Right ventricle myocardium inferior (tissue), 1 donor: ENCODE measurements at regions of chr14 and their contacts with region 1.

Region 1: DNA sequence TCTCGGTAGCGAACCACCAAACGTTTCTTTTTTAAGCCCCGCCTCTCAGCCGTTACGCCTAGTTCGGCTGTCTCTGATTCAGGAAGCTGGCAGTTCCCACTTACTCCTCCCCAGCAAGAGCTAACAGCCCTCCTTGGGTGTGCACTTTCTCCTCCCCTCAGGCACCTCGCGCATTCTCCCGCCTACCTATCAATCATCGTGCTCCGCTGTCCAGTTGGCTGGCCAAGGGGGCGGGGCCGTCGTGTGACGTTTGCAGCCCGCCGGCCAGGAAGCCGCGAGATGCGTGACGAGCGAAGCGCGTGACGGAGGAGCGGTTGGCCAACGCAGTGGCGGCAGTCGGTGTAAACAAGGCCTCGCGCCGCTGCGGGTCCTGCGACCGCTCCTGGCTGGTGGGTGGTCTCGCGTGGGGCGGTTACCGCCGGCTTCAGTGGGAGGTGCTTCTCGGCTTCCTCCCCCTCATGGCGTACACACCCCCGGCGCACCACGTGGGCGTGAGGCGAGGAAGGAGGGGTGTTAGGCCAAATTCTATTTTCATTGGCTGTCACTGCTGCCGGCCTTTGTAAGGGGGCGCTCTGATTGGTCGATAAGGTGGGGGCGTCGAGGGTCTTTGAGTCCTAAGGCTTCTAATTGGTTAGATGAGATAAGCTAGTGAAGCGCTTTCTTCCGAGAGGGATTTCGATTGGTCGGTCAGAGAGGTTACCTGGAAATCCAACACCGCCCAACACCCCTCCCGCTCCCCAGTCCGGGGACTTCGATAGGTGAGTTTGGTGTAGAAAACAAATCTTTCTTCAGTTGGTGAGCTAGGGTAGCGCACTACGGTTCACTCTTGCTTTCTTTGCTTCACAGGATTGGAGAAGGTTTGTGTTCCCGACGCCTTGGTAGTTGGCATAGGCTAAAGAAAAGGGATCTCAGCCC is at the starts of genes DCAF11 and NRL:
- DNase-seq: peak; percentile 99
- ATAC-seq: peak; percentile 96
- total RNA-seq, gene DCAF11: 84.7 TPM
- total RNA-seq, gene NRL: 1.8 TPM

Region 2: DNA sequence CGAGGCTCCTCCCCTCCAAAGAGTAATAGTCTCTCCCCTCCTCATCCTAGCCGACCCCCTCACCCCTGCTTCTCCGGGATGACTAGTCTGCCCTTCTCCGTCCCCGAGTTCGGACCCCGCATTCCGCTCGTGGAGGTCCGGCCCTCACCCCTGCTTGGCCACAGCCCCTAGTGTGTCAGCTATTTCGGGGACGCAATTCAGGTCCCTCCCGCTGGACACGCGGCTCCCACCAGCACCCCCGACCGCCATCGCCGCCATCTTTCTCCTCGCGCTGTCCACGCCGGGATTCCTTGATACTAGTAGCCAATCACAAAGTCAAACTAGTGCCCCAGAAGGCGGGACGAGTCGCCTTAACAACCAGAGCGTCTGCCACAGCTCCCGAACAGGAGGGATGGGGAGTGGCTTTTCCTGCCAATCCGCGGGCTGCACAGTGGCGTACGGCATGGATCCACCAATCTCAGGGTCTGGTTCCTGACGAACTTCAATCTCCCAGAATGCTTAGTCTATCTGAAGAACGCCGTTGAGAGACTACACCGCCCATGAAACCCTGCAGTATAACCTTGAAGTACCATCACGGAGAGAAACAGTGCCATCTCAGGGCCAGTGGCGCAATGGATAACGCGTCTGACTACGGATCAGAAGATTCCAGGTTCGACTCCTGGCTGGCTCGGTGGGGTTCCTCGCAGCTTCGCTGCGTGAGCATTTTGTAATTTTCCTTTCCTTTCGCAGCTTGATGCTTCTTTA is 1185.5 kb before region 1 on chr14 and contains the start of gene PRMT5:
- intact Hi-C with region 1: loop called (anchors 5 kb)
- DNase-seq: peak; percentile 98
- ATAC-seq: peak; percentile 98
- total RNA-seq, gene PRMT5: 48.7 TPM

Region 3: DNA sequence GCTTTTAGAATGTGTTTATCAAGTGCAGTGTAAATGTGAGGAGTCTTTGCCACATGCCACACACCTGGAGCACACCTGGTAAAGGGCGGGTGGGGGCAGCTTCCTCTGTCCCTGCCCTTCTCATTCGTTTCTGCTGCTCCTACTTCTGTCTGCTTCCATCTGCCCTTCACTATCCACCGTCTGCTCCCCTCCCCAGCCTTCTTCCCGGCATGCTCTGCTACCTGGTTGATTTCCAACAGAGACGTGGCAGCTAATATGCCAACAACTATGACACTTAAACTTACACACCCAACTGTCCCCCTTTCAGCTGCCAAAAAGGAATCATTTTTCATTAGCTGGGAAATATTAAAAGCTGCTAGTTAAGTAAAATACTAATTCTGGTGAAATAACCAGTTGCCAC is 72.0 kb before region 1 on chr14:
- intact Hi-C with region 1: no loop called
- DNase-seq: no peak
- ATAC-seq: peak; percentile 26

Region 4: DNA sequence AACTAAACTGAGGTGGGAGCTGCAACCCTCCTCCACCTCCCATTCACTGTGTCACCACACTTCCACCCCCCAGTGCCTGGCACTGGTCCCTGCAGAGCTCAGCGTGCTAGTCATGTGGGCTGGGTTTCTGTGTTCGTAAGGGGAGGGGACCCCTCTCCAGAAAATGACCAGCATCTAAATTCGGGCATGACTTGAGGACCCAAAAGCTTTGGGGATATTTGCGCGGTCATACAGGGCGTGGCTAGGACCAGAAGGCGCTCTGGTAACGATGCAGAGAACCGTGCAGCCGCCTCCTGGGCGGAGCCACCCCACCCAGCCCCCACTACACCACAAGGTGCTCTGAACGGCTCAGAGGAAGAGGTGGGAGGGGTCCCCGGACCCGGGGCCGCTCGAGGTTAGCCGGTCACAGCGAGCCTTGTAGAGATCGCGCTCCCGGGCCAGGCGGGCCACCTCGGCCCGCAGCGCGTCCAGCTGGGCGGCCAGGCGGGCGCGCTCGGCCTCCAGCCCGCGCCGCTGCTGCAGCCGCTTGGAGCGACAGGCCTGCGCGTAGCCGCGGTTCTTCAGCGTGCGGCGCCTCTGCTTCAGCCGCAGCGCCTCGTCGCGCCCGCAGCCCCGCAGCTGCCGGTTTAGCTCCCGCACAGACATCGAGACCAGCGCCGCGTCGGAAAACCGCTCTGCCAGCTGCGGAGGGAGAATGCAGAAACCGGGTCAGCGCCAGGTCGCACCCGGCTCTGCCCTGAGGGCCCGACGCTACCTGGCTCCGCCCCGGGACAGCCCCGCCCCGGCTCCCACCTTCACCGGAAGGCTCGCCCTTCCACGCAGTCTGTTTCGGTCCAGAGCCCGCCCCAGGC is 33.7 kb before region 1 on chr14:
- intact Hi-C with region 1: no loop called
- DNase-seq: no peak
- ATAC-seq: peak; percentile 76

Region 5: GRCh38 chr14:24130717-24131548 is 16.1 kb after region 1 on chr14:
- intact Hi-C with region 1: loop called (anchors 1 kb)
- DNase-seq: peak; percentile 85
- ATAC-seq: peak; percentile 71

Region 6: DNA sequence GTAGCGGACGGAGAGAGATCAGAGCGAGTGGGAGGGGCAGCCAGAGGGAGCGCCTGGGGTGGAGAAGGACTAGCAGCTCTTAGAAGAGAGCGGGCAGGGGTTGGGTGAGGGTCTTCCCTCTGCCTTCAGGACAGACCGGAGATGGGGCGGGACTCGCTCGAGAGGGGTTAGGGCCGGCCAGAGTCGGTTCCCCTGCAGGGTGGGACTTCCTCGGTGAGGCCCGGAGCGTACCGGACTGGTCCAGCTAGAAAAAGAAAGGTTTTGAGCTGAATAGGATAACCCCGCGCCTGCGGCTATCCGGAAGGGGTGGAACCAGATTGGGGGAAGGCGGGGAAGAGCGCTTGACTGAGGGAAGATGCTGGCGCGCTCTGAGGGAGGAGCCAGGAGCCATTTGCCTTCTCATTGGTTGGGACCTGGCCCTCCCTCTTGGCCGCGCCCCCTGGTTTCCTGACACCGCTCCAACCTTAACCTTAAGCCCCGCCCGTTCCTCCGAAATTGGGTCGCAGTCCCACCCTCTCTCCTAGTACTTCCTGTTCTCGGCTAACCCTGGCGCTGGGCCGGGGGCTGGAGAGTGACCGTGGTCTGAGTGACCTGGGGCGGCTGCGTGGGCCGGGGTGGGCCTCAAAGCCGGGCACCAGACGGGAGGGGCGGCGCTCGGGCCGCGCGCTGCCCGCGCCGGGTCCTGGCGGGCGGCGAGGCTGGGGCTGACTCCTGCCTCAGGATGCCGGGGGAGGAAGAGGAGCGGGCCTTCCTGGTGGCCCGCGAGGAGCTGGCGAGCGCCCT is 32.4 kb after region 1 on chr14 and contains the start of gene RNF31:
- intact Hi-C with region 1: loop called (anchors 1 kb)
- DNase-seq: peak; percentile 98
- ATAC-seq: peak; percentile 95
- total RNA-seq, gene RNF31: 33.4 TPM

Region 7: DNA sequence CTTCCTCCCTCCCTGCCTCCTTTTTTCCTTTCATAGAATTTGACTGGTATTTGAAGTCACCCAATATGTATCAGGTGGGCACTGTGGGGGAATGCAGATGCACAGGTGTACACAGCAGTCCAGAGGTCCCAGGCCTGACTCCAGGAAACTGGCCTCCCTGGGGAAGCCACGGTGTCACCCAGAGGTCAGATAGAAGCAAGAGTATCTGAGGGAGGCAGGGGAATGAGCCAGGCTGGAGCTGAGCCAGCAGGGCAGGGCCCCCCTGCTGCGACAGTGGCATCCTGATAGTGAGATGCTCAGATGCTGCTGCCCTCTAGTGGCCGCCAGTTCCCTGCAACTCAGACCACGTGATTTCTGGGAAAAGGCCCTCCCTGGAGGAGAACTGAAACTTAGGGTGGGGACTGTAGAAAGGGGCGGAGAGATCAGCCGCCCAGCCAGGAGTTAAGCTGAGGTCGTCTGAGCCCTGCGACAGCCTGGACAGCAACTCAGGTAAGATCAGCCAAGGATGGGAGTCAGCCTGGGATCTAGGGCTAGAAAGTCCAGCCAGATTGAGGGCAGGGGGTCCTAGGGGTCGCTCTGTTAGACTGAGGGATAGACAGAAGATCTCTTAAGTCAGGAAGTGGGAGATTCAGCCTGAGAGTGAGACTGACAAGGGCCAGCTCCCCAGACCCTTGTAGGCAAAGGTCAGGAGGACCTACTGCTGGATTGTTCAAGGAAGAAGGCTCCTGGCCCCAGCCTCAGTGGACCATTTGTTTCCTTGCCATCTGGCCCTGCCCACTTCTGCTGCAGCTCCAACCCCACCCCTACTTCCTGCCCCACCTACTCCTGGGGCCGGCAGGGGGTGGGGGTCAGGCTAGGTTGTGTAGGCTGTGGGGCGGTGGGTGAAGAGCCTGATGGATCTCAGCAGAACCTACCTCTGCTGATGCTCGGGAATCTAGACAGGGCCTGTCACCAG is 46.3 kb after region 1 on chr14 and contains the start of gene IRF9:
- intact Hi-C with region 1: loop called (anchors 1 kb)
- DNase-seq: peak; percentile 96
- ATAC-seq: peak; percentile 94
- total RNA-seq, gene IRF9: 30.5 TPM

Region 8: DNA sequence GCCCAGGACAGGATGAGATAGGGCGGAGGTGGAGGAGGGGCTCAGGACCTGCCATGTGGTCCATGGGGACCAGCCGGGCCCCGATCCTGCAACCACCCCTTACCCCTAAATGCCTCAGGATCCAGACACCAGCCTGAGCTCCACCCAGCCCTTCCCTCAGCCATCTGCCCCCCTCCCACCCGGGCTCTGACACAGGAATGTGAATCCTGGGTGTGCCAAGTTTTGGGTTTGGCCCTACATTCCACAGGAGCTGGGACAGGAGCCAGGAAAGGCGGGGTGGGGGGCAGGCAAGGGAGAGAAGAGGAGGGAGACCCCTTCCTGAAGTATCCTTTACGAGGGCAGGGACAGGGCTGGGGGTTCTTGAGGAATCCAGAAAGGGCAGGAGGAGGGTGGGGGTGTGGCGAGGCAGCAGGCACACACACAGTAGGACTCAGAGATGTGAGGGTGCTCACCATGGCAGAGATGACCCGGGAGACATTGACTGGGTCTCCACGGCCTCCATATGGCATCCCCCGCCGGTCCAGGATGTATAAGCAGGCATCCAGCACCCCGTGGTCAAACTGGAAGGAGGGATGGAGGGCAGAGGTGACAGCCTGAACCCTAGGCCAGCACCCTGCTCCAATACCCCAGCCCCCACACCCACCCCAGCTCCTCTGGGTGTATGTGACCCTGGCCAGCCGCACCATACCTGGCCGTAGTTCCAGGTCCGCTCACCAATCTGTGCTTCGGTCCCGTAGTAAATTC is 144.6 kb after region 1 on chr14:
- intact Hi-C with region 1: no loop called
- DNase-seq: no peak
- ATAC-seq: no peak